PC-3 (cell line): ENCODE measurements at regions of chr1 and their contacts with region 1.

Region 1: GRCh38 chr1:13725714-13726175 is 25.8 kb downstream of the PRDM2 start:
- DNase-seq: peak; percentile 60
- ATAC-seq: peak; percentile 90
- H3K4me3 ChIP-seq: no peak overlapping the region
- H3K27ac ChIP-seq: no peak overlapping the region
- H3K4me1 ChIP-seq: no peaks in the 10 kb centered on the region
- H3K27me3 ChIP-seq: no peaks in the 10 kb centered on the region
- CTCF ChIP-seq: peak; percentile 73

Region 2: GRCh38 chr1:13469343-13469742 is 256.4 kb before region 1 on chr1:
- CTCF ChIA-PET with region 1: no interaction called
- POLR2A ChIA-PET with region 1: no interaction called
- intact Hi-C with region 1: loop called (anchors 5 kb)
- DNase-seq: peak; percentile 55
- ATAC-seq: peak; percentile 72
- H3K4me3 ChIP-seq: no peak overlapping the region
- H3K27ac ChIP-seq: no peak overlapping the region
- H3K4me1 ChIP-seq: no peaks in the 10 kb centered on the region
- H3K27me3 ChIP-seq: peaks cover 39% of the 10 kb centered on the region
- CTCF ChIP-seq: peak; percentile 57

Region 3: DNA sequence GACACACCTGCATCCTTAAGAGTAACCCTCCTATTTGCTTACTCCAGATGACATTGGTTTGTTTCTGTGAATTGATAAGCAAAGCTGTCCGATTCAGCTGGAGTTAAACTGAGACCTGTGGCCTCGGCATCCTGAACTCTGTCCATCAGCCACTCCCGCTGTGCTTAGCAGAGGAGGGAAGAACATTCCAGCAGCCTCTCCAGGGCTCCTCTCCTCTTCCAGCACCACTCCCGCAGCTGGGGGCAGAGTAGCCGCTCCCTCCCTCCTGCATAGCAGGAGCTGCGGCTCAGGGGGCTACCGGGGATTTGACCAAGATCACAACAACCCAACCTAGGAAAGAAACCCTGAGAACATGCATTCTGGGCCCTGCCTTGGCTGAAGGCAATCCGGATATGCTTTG is 220.7 kb before region 1 on chr1:
- CTCF ChIA-PET with region 1: no interaction called
- POLR2A ChIA-PET with region 1: no interaction called
- intact Hi-C with region 1: no loop called
- DNase-seq: no peak
- ATAC-seq: no peak
- H3K4me3 ChIP-seq: no peak overlapping the region
- H3K27ac ChIP-seq: no peak overlapping the region
- H3K4me1 ChIP-seq: 0 out of 2 replicates have a peak, but pooled peaks cover 3% of the 10 kb centered on the region
- H3K27me3 ChIP-seq: peaks cover 57% of the 10 kb centered on the region
- CTCF ChIP-seq: no peak

Region 4: DNA sequence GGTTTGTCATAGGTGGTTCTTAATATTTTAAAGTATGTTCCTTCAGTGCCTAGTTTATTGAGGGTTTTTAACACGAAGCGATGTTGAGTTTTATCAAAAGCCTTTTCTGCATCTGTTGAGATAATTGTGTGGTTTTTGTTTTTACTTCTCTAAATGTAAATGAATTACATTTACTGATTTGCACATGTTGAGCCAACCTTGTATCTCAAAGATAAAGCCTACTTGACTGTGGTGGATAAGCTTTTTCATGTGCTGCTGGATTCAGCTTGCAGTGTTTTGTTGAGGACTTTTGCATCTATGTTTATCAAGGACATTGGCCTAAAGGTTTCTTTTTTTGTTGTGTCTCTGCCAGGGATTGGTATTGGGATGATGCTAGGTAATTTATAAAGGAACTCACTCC is 116.8 kb after region 1 on chr1:
- CTCF ChIA-PET with region 1: no interaction called
- POLR2A ChIA-PET with region 1: no interaction called
- intact Hi-C with region 1: no loop called
- DNase-seq: no peak
- ATAC-seq: no peak
- H3K4me3 ChIP-seq: no peak overlapping the region
- H3K27ac ChIP-seq: no peak overlapping the region
- H3K4me1 ChIP-seq: no peaks in the 10 kb centered on the region
- H3K27me3 ChIP-seq: peaks cover 36% of the 10 kb centered on the region
- CTCF ChIP-seq: no peak

Region 5: DNA sequence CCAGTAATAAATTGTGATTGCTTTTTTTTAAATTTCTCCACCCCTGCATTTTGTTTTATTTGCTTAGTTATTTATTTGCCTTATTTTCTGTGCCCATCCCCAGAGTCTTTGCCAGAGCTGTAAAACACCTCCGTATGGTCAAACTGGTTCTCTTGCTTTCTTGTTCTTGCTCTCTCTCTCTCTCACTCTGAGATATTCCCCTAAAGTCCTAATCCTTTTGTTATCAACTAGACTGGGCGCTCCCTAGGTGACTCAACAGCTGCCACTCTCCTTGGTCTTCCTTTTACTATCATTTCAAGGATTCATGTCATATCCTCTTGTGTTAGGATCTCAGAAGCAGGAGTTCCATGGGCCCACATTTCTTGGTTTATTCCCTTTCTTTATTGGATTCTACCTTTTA is 134.3 kb after region 1 on chr1:
- CTCF ChIA-PET with region 1: no interaction called
- POLR2A ChIA-PET with region 1: no interaction called
- intact Hi-C with region 1: no loop called
- DNase-seq: peak; percentile 32
- ATAC-seq: no peak
- H3K4me3 ChIP-seq: no peak overlapping the region
- H3K27ac ChIP-seq: no peak overlapping the region
- H3K4me1 ChIP-seq: no peaks in the 10 kb centered on the region
- H3K27me3 ChIP-seq: peaks cover 12% of the 10 kb centered on the region
- CTCF ChIP-seq: no peak